ENCODE measurements at regions of chr2 and their contacts with region 1.

Region 1: DNA sequence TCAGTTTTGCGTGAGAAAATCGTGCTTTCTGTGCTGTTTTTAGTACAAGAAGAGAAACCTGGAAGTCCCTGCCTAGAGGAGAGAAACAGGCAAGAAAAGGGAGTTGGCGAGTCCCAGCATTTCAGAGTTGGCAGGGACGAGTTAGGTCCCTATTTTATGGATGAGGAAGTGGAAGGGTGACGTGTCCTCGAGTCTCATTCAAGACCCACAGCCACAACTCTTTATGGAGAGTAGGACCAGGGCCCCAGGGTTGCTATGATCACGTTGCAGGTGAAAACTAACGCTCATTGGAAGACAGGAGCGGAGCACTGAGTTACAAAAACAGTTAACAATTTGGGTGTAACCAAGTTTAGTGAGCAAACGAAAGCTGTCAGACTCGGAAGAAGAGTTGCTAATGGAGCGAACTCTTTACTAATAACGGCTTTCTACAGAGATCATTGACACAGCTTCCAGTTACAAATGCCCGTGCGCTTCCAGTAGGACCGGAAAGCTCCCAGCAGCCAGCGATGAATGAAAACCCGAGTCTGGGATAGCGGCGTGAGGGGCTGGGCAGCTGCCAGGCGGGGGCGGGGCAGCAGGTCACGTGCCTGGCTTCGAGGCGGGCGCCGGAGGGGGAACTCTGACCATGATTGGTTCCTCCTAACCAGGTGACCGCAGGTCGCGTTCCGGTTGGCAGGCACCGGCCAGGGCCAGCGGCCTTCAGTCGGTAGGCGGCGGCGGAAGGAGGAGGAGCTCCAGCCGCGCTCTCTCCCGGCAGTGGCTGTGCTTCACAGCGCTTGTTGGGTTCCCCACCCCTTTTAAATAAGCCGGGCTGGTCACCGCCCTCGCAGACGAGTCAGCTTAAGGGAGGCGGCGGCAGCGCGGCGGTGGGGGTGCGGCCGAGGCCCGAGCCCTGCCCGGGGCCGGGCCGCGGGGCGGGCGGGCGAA is at the start of gene CCNYL1:
- DNase-seq: peak; percentile 99
- ATAC-seq: peak; percentile 99
- H3K4me3 Mint-ChIP-seq: peak within 1 kb of the TSS; percentile 83
- H3K27ac Mint-ChIP-seq: peak within 1 kb of the TSS; percentile 88
- H3K4me1 Mint-ChIP-seq: peaks cover 25% of the 10 kb centered on the region
- H3K27me3 Mint-ChIP-seq: no peaks in the 10 kb centered on the region
- total RNA-seq, gene CCNYL1: 4.0 to 5.5 TPM

Region 2: DNA sequence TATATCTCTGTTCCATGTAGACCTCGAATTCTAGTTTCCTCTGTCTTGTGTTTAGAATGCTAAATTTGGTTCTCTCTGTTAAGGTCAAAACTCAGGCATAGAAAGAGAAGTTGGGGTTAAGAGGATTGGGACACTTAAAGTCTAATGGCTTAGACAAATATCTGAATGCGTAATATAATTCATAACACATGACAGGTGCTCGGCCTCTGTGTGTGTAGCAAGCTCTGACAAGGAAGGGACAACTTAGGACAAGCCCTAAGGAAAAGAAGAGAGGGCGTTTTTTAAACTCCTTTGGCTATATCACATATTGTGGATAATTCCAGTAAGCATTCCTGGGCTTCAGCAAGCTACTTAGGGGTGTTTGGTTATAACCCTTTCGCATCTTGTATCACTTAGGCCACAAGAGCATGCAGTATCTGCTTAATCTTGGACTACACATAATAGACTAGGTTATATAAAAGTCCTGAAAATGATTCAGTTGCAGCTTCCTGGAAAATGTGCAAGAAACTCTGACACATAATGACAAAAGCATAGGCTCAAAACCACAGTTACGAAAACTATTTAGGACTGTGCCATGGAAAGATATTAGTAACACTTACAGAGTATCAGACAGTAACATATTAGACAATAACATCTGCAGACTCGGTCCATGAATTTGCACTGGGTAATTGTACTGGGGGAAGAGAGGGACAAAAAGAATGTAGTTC is 197.4 kb before region 1 on chr2:
- CTCF ChIA-PET with region 1: no interaction called
- POLR2A ChIA-PET with region 1: no interaction called
- intact Hi-C with region 1: loop called in 1 of 2 experiments (anchors 5 kb)
- DNase-seq: no peak
- ATAC-seq: peak; percentile 65
- H3K4me3 Mint-ChIP-seq: peak overlapping the region; percentile 19
- H3K27ac Mint-ChIP-seq: peak overlapping the region; percentile 49
- H3K4me1 Mint-ChIP-seq: peaks cover 41% of the 10 kb centered on the region
- H3K27me3 Mint-ChIP-seq: no peaks in the 10 kb centered on the region

Region 3: GRCh38 chr2:207692206-207693065 is 18.6 kb before region 1 on chr2:
- CTCF ChIA-PET with region 1: interaction called, 3 read pairs
- POLR2A ChIA-PET with region 1: interaction called, 5 read pairs
- intact Hi-C with region 1: loop called in 1 of 2 experiments (anchors 1 kb)
- DNase-seq: peak; percentile 66
- ATAC-seq: peak; percentile 75
- H3K4me3 Mint-ChIP-seq: no peak overlapping the region
- H3K27ac Mint-ChIP-seq: no peak overlapping the region
- H3K4me1 Mint-ChIP-seq: peaks cover 9% of the 10 kb centered on the region
- H3K27me3 Mint-ChIP-seq: no peaks in the 10 kb centered on the region

Region 4: GRCh38 chr2:207769597-207770486 is 58.8 kb after region 1 on chr2 and contains the start of gene FZD5:
- CTCF ChIA-PET with region 1: no interaction called
- POLR2A ChIA-PET with region 1: no interaction called
- intact Hi-C with region 1: loop called (anchors 1 to 2 kb)
- DNase-seq: peak; percentile 90
- ATAC-seq: peak; percentile 83
- H3K4me3 Mint-ChIP-seq: peak within 1 kb of the TSS; percentile 79
- H3K27ac Mint-ChIP-seq: no peak within 1 kb of the TSS
- H3K4me1 Mint-ChIP-seq: peaks cover 27% of the 10 kb centered on the region
- H3K27me3 Mint-ChIP-seq: peaks cover 41% of the 10 kb centered on the region
- total RNA-seq, gene FZD5: 1.1 to 1.3 TPM

Region 5: GRCh38 chr2:208025037-208025813 is 314.1 kb after region 1 on chr2 and contains the start of gene PLEKHM3:
- CTCF ChIA-PET with region 1: no interaction called
- POLR2A ChIA-PET with region 1: no interaction called
- intact Hi-C with region 1: loop called in 1 of 2 experiments (anchors 1 kb)
- DNase-seq: peak; percentile 88
- ATAC-seq: peak; percentile 83
- H3K4me3 Mint-ChIP-seq: peak within 1 kb of the TSS; percentile 77
- H3K27ac Mint-ChIP-seq: peak within 1 kb of the TSS; percentile 94
- H3K4me1 Mint-ChIP-seq: peaks cover 12% of the 10 kb centered on the region
- H3K27me3 Mint-ChIP-seq: no peaks in the 10 kb centered on the region
- total RNA-seq, gene PLEKHM3: 4.5 to 5.2 TPM

Measured in activated CD4-positive, alpha-beta T cell treated with anti-CD3 and anti-CD28 coated beads for 36 hours (primary cell).